ENCODE measurements at regions of chr17 and their contacts with region 1.

Region 1: DNA sequence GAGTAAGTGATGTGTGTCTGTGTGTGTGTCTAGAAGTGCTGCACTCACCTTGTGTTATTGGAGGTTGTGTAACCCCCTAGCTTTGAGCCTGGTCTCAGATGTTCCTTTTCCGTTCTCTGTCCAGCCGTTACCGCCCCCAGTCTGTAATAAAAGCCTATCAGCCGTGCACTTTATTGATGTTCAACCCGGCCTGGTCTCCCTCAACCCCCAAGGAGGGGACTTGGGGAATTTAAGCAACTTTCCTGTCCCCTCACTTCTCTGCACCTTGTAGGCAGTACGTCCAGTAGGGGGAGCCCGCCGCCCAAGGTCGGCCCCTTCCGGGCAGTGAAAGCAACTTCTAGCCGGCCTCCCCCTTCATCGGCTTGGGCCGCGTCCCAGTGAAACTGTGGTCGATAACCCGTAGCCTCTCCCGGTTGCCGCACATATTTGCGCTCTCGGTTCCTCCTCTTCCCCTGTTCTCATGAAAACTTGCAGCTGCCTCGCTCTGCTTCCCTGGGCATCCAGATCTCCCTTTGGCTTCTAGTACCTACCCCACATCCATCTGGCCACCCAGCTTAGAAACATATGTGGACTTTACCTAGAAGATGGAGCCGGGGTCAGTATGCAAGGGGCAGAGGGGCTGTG is 7.9 kb downstream of the PNPO start:
- DNase-seq: peak; percentile 94
- ATAC-seq: peak; percentile 89

Region 2: DNA sequence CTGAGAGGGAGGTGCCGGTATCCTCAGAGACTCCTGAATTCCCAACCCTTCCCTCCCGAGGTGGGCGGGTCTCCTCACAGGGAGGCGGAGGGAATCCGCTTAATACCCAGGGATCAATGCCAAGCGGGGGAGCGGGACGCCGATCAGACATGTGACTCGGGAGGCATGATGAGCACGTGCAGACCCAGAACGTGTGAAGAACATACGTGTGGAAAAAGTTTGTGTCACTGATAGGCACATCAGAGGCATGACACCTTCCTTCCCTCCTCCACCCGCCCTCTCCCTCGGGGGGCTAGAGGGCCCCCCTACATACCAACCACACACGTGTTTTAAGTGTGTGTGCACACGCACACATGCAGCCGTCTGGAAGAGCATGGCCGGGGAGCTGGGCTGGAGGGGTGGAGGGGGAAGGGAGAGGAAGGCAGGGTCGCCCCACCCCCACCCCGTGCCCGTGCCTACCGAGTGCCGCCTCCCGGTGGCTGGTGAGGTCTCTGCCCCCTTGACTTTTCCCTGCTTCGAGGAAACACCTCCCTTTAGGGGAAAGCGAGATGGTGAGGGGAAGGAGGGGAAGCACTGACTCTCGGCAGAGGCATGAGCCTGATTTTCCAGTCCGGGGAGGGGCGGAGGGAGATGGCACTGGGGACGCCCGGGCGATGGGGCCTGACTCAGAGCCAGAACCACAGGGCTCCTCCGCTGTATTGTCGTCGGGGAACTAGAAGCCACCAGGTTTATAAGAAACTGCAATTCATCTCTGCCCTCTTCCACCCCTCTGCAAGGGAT is 228.3 kb before region 1 on chr17:
- intact Hi-C with region 1: no loop called
- DNase-seq: no peak
- ATAC-seq: no peak

Region 3: GRCh38 chr17:47895856-47896671 is 53.2 kb before region 1 on chr17 and contains the start of gene SP2:
- intact Hi-C with region 1: loop called (anchors 5 kb)
- DNase-seq: peak; percentile 99
- ATAC-seq: peak; percentile 93
- total RNA-seq, gene SP2: 12.4 TPM